CD8-positive, alpha-beta memory T cell (primary cell): ENCODE measurements at regions of chr12 and their contacts with region 1.

Region 1: GRCh38 chr12:55817346-55818139 is at the starts of genes ORMDL2 and SARNP:
- DNase-seq: peak; percentile 91 to 99 (median 98)
- H3K4me3 ChIP-seq: peak within 1 kb of the TSS; percentile 94
- H3K4me3 Mint-ChIP-seq: no peak within 1 kb of the TSS
- H3K27ac ChIP-seq: peak within 1 kb of the TSS; percentile 86
- H3K27ac Mint-ChIP-seq: no peak within 1 kb of the TSS
- H3K4me1 ChIP-seq: peaks cover 39% of the 10 kb centered on the region
- H3K4me1 Mint-ChIP-seq: peaks cover 27 to 39% (median 36%) of the 10 kb centered on the region in 3 donors
- H3K27me3 ChIP-seq: no peaks in the 10 kb centered on the region
- H3K27me3 Mint-ChIP-seq: no peaks in the 10 kb centered on the region
- total RNA-seq, gene ORMDL2: 49.0 to 49.7 TPM
- total RNA-seq, gene SARNP: 89.7 to 103 TPM

Region 2: GRCh38 chr12:55850893-55851292 is 33.4 kb after region 1 on chr12:
- CTCF ChIA-PET with region 1: no interaction called
- POLR2A ChIA-PET with region 1: no interaction called
- DNase-seq: no peak
- H3K4me3 ChIP-seq: no peak overlapping the region
- H3K4me3 Mint-ChIP-seq: no peak overlapping the region
- H3K27ac ChIP-seq: no peak overlapping the region
- H3K27ac Mint-ChIP-seq: no peak overlapping the region
- H3K4me1 ChIP-seq: no peaks in the 10 kb centered on the region
- H3K4me1 Mint-ChIP-seq: no peaks in the 10 kb centered on the region
- H3K27me3 ChIP-seq: no peaks in the 10 kb centered on the region
- H3K27me3 Mint-ChIP-seq: peaks cover 8 to 26% of the 10 kb centered on the region in 2 donors

Region 3: DNA sequence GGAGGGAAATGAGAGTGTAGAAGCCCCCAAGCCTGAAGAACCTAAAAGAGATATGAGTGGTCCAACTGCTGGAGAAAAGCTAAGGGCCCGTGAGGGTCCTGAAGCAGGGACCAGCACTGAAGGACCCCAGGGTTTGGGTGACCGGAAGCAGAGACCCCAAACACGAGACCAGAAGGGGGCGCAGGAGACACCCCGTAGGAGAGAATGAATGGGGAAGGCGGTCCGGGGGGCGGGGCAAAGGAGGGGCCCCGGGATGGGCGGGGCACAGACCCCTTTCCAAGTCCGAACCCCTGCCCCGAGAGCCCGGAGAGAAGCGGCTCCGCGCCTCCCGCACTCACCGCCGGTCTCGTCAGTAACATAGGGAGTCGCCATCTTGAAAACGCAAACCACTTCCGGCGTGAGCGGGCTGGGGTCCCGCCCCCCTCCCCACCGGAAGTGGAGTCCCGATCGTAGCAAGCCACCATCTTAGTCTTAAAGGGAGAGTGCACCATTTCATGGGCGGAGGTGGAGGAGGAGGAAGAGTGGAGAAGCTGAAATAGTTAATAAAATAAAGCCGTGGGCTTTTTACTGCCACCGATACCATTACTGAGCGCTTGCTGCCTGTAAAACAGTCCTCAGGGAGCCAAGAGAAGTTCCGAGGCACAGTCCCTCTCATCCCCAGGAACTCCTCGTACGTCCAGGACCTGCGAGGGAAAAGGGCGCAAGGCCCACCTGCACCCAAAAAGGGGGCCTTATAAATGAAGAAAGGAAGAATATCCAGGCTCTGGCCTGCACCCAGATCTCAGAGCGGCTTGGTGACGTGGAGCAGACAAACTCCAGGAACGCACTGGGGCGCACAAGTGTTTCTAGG is 109.4 kb after region 1 on chr12:
- CTCF ChIA-PET with region 1: interaction called, 12 read pairs
- POLR2A ChIA-PET with region 1: interaction called, 25 read pairs
- DNase-seq: peak; percentile 82 to 94 (median 86)
- H3K4me3 ChIP-seq: peak overlapping the region; percentile 83
- H3K4me3 Mint-ChIP-seq: peak overlapping the region; percentile 94 to 100 (median 97)
- H3K27ac ChIP-seq: peak overlapping the region; percentile 79
- H3K27ac Mint-ChIP-seq: peak overlapping the region; percentile 91 to 99 (median 96)
- H3K4me1 ChIP-seq: peaks cover 46% of the 10 kb centered on the region
- H3K4me1 Mint-ChIP-seq: peaks cover 55 to 61% (median 58%) of the 10 kb centered on the region in 3 donors
- H3K27me3 ChIP-seq: no peaks in the 10 kb centered on the region
- H3K27me3 Mint-ChIP-seq: peaks cover 0 to 6% of the 10 kb centered on the region in 2 donors